Activated T-helper 2 cell treated with anti-CD3 and anti-CD28 coated beads, Interferon-gamma antibody, Interleukin-2, Interleukin-4, amounts not matched to agents 10 μg/mL and 5 μg/mL and 100 μg/mL, durations not matched to agents 14 hours and 24 hours and 36 hours (primary cell): ENCODE measurements at regions of chr4 and their contacts with region 1.

Region 1: GRCh38 chr4:95248720-95249425 is 299.9 kb downstream of the UNC5C start:
- DNase-seq: no peak
- H3K4me3 Mint-ChIP-seq: no peak overlapping the region
- H3K27ac Mint-ChIP-seq: peak overlapping the region; percentile 88
- H3K4me1 Mint-ChIP-seq: peaks cover 34% of the 10 kb centered on the region
- H3K27me3 Mint-ChIP-seq: no peaks in the 10 kb centered on the region

Region 2: DNA sequence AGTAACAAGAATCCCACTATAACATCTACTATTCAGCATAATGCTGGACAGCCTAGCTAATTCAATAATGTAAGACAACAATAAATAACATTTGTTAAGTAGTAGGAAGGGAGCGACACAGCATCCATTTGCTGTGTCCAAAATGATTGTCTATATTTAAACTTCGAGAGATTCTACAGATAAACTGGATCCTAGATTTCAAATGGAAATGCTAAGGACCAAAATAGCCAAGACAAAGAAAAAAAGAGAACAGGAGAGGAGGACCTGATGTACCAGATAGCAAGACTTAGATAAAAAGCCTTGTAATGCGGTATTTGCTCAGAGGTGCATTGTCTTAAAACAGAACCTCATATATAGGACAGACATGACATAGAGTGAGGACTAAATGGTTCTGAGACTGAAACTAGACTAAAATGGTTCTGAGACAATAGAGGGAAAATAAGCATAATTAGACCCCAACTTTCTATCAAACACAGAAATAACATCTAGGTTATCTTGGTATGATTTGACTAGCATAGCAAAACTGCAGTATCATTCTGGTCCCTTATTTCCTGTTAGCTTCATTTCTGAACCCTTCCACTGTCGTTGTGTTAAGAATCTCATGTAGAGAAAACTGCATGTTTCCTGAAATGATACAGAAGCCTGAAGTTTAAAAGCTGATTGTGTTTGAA is 910.1 kb before region 1 on chr4:
- intact Hi-C with region 1: loop called (anchors 2 kb)
- DNase-seq: no peak
- H3K4me3 Mint-ChIP-seq: peak overlapping the region; percentile 52
- H3K27ac Mint-ChIP-seq: peak overlapping the region; percentile 91
- H3K4me1 Mint-ChIP-seq: peaks cover 30% of the 10 kb centered on the region
- H3K27me3 Mint-ChIP-seq: peaks cover 4% of the 10 kb centered on the region

Region 3: DNA sequence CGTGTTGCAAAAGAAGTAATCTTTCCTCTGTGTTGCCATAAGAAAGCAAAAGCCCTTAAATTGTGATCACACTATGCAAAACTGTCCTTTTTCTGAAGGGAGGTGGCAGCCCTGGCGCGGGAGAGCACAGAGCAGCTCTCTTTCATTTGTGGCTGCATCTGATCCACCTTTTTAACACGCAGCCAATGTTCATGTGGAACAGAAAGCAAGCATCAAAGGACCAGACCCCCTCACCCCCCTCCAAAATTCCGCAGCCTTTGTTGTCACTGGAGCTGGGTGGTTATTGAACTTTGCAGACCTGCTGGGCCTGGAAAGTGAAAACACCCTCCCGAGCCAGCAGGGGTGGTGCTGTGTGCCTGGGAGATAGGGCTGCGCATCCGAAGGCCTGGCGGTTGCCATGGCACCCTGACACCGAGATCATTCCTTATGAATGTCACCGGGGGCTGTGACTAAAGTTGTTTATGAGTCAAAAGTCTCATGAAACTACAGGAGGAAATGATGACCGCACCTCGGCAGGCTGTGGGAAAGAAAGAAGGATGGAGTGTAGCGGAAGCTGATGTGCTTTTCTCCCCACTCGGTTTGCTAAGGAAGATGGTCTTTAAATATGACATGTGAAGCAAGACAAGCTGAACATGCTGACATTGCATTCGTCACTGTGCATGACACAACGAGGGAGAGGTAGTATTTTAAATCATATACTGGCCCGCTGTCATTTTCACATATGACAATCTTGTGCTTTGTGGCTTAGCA is 67.5 kb before region 1 on chr4:
- intact Hi-C with region 1: loop called (anchors 2 kb)
- DNase-seq: no peak
- H3K4me3 Mint-ChIP-seq: no peak overlapping the region
- H3K27ac Mint-ChIP-seq: no peak overlapping the region
- H3K4me1 Mint-ChIP-seq: peaks cover 8% of the 10 kb centered on the region
- H3K27me3 Mint-ChIP-seq: no peaks in the 10 kb centered on the region

Region 4: DNA sequence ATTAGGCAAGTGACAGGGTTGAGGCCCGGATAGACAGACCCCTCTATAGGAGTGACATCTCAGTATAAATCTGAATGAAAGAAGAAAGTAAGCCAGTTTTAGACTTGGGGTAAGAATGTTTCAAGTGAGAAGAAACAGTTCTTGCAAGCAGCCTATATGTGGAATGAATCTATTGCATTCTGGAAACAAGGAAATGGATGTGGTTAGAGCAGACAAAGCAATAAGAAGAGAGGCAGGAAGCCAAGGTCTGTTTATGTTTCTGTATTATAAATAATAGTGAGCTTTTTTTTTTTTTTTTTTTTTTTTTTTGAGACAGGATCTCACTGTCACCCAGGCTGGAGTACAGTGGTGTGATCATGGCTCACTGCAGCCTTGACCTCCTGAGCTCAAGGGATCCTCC is 44.1 kb after region 1 on chr4:
- intact Hi-C with region 1: loop called (anchors 1 kb)
- DNase-seq: no peak
- H3K4me3 Mint-ChIP-seq: no peak overlapping the region
- H3K27ac Mint-ChIP-seq: no peak overlapping the region
- H3K4me1 Mint-ChIP-seq: peaks cover 36% of the 10 kb centered on the region
- H3K27me3 Mint-ChIP-seq: no peaks in the 10 kb centered on the region

Region 5: DNA sequence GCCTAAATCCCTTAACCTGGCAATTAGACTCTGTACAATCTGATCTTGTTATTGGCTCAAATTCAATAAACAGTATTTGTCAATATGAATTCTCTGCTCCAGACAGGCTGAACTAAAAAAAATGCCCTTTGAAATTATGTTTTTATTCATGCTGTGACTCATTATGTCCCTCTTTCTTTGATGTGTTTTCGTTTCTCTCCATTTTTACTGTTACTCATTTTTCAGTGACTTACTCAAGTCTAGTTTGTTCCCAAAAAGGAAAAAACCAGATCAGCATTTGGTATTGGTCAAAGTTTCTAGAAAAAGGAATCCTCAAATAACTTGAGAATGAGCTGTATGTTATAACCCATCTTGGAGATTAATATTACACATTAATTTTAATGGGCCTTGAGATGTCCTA is 259.5 kb after region 1 on chr4:
- intact Hi-C with region 1: loop called (anchors 1 kb)
- DNase-seq: no peak
- H3K4me3 Mint-ChIP-seq: no peak overlapping the region
- H3K27ac Mint-ChIP-seq: no peak overlapping the region
- H3K4me1 Mint-ChIP-seq: peaks cover 1% of the 10 kb centered on the region
- H3K27me3 Mint-ChIP-seq: peaks cover 16% of the 10 kb centered on the region